ENCODE measurements at regions of chr11 and their contacts with region 1.

Region 1: DNA sequence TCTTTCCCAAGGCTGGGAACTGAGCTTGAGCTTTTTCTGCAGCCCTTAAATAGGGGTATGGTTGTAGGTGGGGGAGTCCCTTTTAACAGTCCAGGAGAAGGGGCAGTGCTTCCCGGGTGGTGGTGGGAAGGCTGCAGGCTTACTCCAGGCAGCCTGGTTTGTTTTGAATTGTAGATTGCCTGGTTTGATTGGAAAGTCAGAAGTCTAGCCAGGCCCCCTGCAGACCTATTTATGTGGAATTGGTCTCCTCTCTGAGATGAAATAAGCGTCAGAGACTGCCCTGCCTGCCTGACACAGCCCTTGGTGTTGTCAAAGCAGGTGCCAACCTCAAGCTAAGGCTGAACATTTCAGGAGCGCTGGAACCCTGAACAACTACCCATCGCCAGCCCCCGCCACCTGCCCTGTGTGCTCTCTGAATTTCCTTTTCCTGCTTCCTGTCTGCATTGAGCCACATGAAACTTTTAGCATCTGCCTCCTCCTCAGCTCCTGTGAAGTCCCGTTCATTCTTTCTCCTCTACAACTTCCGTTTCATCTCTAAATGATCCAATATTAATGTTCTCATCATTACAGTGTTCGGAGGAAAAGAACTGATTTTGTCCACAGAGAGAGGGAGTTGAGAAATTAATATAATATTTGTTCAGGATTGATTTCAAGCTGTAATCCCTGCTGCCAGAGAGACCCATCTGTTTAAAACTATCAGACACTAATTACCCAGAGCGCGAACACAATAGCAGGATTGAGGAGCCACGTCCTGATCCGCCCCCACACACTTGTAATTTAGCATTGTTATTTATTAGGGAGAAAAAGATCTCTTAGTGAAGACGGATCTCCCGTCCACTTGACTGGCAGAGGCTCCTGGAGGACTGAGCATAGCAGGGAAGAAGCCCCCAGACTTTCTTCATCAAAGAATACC is 136.5 kb downstream of the TRIM29 start:
- DNase-seq: no peak
- H3K4me3 ChIP-seq: no peak overlapping the region
- H3K27ac ChIP-seq: no peak overlapping the region
- H3K4me1 ChIP-seq: no peaks in the 10 kb centered on the region
- H3K27me3 ChIP-seq: no peaks in the 10 kb centered on the region
- CTCF ChIP-seq: no peak

Region 2: GRCh38 chr11:121231576-121232278 is 1230.3 kb after region 1 on chr11:
- intact Hi-C with region 1: loop called (anchors 5 kb)
- DNase-seq: no peak
- H3K4me3 ChIP-seq: no peak overlapping the region
- H3K27ac ChIP-seq: no peak overlapping the region
- H3K4me1 ChIP-seq: no peaks in the 10 kb centered on the region
- H3K27me3 ChIP-seq: no peaks in the 10 kb centered on the region
- CTCF ChIP-seq: no peak